T-cell (primary cell): ENCODE measurements at regions of chr9 and their contacts with region 1.

Region 1: GRCh38 chr9:8168916-8169438 is 369.4 kb upstream of the DMAC1 start:
- DNase-seq: no peak
- ATAC-seq: no peak
- H3K4me3 ChIP-seq: no peak overlapping the region
- H3K4me3 Mint-ChIP-seq: no peak overlapping the region
- H3K27ac ChIP-seq: no peak overlapping the region
- H3K27ac Mint-ChIP-seq: peak overlapping the region in 1 of 2 donors; percentile 51
- H3K4me1 ChIP-seq: no peaks in the 10 kb centered on the region
- H3K4me1 Mint-ChIP-seq: no peaks in the 10 kb centered on the region
- H3K27me3 ChIP-seq: no peaks in the 10 kb centered on the region
- H3K27me3 Mint-ChIP-seq: peaks cover 0 to 2% of the 10 kb centered on the region in 2 donors

Region 2: GRCh38 chr9:8156346-8156745 is 12.6 kb before region 1 on chr9:
- CTCF ChIA-PET with region 1: no interaction called
- POLR2A ChIA-PET with region 1: interaction called in 1 of 2 experiments, 31 read pairs
- DNase-seq: no peak
- ATAC-seq: no peak
- H3K4me3 ChIP-seq: no peak overlapping the region
- H3K4me3 Mint-ChIP-seq: no peak overlapping the region
- H3K27ac ChIP-seq: no peak overlapping the region
- H3K27ac Mint-ChIP-seq: no peak overlapping the region
- H3K4me1 ChIP-seq: no peaks in the 10 kb centered on the region
- H3K4me1 Mint-ChIP-seq: peaks cover 0 to 2% (median 0%) of the 10 kb centered on the region in 3 donors
- H3K27me3 ChIP-seq: no peaks in the 10 kb centered on the region
- H3K27me3 Mint-ChIP-seq: no peaks in the 10 kb centered on the region

Region 3: DNA sequence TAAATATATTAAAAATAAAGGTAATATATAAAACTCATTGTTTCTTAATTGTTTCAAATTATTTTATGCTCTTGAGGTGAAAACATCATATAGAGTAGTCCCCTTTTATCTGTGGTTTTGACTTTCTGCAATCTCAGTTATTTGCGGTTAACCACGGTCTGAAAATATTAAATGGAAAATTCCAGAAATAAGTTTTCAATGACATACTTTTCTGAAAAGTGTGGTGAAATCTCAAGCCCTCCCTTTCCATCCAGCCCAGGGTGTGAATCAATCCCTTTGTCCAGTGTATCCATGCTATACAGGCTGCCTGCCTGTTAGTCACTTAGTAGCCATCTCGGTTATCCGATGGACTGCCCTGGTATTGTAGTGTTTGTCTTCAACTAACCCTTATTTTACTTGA is 177.3 kb after region 1 on chr9:
- CTCF ChIA-PET with region 1: no interaction called
- POLR2A ChIA-PET with region 1: no interaction called
- DNase-seq: no peak
- ATAC-seq: no peak
- H3K4me3 ChIP-seq: no peak overlapping the region
- H3K4me3 Mint-ChIP-seq: no peak overlapping the region
- H3K27ac ChIP-seq: no peak overlapping the region
- H3K27ac Mint-ChIP-seq: no peak overlapping the region
- H3K4me1 ChIP-seq: no peaks in the 10 kb centered on the region
- H3K4me1 Mint-ChIP-seq: no peaks in the 10 kb centered on the region
- H3K27me3 ChIP-seq: no peaks in the 10 kb centered on the region
- H3K27me3 Mint-ChIP-seq: peaks cover 0 to 5% of the 10 kb centered on the region in 2 donors